A549 (cell line): ENCODE measurements at regions of chr1 and their contacts with region 1.

Region 1: DNA sequence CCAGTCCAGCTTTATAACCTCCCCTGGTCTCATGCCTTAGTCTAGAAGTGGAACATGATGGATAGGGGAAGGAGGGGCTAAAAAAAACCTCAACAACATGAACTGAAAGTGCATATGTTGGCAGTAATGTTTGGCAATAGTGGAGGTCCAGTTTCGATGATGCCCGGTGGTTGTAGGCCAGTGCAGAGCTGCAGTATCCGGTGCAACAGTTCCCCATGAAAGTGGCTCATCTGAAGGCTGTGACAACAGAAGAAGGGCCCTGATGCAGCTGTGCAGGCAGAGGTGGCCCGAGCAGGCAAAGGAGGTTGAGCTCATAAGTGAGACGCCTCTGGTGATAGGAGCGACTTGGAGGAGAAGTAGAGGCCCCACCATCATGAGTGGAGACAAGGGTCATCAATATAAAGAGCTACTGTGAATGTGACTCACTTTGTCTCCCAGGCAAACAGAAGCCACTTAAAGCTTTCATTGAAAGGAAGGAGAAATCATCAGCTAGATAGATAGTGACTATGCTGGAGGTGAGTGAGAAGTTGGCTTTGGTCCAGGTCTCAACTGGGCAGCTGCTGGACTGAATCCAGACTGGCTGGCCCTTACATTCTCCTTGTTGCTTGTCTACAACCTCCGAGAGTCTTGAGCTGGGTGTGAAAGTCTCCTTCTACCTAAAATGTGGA is 10.2 kb upstream of the CREG1 start:
- DNase-seq: no peak
- ATAC-seq: no peak
- H3K4me3 ChIP-seq: no peak overlapping the region
- H3K27ac ChIP-seq: peak overlapping the region in 1 of 2 experiments; percentile 66; a peak in 2 of 6 replicates
- H3K4me1 ChIP-seq: peaks cover 13% of the 10 kb centered on the region; the same call in 2 of the 3 replicates
- CTCF ChIP-seq: no peak
- EP300 ChIP-seq: no peak
- POLR2A ChIP-seq: no peak
- RAD21 ChIP-seq: no peak

Region 2: GRCh38 chr1:167553136-167554027 is 10.3 kb before region 1 on chr1 and contains the start of gene CREG1:
- CTCF ChIA-PET with region 1: interaction called, 28 read pairs
- POLR2A ChIA-PET with region 1: interaction called, 6 read pairs
- DNase-seq: peak; percentile 93 to 96
- ATAC-seq: peak; percentile 95 to 100
- H3K4me3 ChIP-seq: peak within 1 kb of the TSS; percentile 68
- H3K27ac ChIP-seq: peak within 1 kb of the TSS; percentile 77 to 95
- H3K4me1 ChIP-seq: peaks cover 21% of the 10 kb centered on the region
- CTCF ChIP-seq: no peak
- EP300 ChIP-seq: no peak
- POLR2A ChIP-seq: peak; percentile 90
- RAD21 ChIP-seq: no peak
- polyA plus RNA-seq, gene CREG1: 129 and 132 TPM in 2 replicates